HEK293 (cell line): ENCODE measurements at regions of chr19 and their contacts with region 1.

Region 1: DNA sequence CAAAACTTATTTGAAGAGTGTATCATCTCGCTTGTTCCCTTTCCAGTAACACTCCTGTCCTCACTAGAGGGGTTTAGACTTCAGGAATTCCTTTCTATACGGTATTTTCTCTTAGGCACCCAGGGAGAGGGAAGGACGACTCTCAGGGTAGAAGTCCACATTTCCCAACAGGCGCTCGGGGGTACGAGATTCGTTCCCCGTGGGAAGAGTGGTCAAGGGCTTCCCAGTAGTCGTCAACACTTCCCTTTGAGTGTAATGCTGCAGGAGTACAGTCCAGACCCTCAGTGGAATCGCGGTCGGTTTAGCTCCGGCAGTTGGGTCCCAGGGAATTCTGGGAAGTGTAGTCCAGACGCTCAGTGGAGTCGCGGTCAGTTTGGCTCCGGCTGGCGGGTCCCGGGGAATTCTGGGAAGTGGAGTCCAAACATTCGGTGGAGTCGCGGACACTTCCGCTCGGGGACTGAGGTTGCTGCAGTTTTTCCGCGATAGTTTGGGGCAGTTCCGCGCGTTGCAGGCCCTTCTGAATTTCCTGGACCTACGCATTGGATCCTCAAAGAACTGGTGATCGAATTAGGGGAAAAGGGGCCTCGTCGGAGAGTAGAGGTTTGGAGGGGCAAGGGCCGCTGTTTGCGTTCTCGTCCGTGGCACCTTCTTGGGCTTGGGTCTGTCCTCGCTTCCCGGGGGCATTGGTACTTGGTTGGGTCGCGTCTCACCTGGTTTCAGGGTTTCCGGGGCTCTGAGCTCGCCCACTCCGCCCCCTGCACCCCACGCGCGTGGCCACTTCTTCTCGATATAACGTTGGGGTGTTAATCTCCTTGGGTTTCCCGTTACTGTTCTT is at the start of gene ZNF224:
- H3K4me3 ChIP-seq: peak within 1 kb of the TSS; percentile 61
- H3K27ac ChIP-seq: peak within 1 kb of the TSS; percentile 92
- H3K4me1 ChIP-seq: peaks cover 19% of the 10 kb centered on the region; the same call in 1 of the 2 replicates
- CTCF ChIP-seq: no peak; the same call in 1 of the 2 replicates

Region 2: GRCh38 chr19:43923875-43924274 is 170.3 kb before region 1 on chr19:
- CTCF ChIA-PET with region 1: no interaction called
- POLR2A ChIA-PET with region 1: no interaction called
- H3K4me3 ChIP-seq: no peak overlapping the region
- H3K27ac ChIP-seq: no peak overlapping the region
- H3K4me1 ChIP-seq: no peaks in the 10 kb centered on the region
- CTCF ChIP-seq: no peak

Region 3: DNA sequence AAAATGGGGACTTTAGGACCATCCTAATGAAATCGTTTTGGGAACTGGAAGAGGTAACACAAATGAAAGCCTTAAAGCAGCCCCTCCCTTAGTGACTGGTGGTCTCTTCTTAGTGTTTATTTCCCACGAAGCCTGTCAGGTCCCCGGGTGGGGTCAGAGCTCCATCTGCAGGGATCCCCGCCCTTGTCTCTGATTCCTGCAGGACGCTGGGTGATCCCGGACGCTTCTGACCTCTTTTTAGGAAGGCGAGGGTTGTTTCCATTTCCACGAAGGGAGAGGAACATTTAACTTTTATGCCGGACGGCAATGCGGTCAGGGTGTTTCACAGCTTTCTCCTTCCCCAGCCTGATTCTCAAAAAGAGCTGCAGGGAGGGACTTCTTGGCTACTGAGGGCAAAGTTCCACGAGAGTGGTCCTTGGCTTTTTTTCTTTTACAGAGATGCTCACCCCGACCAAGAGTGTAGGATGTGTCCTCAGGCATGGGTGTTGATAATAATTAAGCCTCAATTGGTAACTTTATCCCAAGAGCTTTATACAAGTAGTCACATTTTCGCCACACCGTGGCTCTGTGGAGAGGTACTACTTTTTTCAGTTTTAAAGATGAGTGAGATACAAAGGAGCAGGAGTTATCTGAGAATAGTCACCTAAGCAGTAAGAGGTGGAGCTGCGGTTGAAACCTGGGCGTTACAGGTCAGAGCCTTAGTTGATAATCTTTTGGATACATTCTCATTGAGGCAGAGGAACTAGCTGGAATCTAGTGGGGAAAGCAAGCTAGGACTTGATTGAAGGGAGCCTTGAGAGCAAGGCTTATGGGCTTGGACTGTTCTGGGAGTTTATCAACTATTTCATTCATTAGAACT is 21.4 kb before region 1 on chr19:
- CTCF ChIA-PET with region 1: interaction called, 12 read pairs
- POLR2A ChIA-PET with region 1: interaction called, 6 read pairs
- H3K4me3 ChIP-seq: peak overlapping the region; percentile 49
- H3K27ac ChIP-seq: peak overlapping the region; percentile 62; the same call in 1 of the 2 replicates
- H3K4me1 ChIP-seq: peaks cover 16% of the 10 kb centered on the region
- CTCF ChIP-seq: no peak

Region 4: GRCh38 chr19:44113138-44113783 is 19.1 kb after region 1 on chr19 and contains the start of gene ZNF225:
- CTCF ChIA-PET with region 1: interaction called, 3 read pairs
- POLR2A ChIA-PET with region 1: interaction called, 33 read pairs
- H3K4me3 ChIP-seq: peak within 1 kb of the TSS; percentile 59
- H3K27ac ChIP-seq: peak within 1 kb of the TSS; percentile 81
- H3K4me1 ChIP-seq: peaks cover 14% of the 10 kb centered on the region
- CTCF ChIP-seq: peak; percentile 79; the same call in 1 of the 2 replicates